ENCODE measurements at regions of chr5 and their contacts with region 1.

Region 1: DNA sequence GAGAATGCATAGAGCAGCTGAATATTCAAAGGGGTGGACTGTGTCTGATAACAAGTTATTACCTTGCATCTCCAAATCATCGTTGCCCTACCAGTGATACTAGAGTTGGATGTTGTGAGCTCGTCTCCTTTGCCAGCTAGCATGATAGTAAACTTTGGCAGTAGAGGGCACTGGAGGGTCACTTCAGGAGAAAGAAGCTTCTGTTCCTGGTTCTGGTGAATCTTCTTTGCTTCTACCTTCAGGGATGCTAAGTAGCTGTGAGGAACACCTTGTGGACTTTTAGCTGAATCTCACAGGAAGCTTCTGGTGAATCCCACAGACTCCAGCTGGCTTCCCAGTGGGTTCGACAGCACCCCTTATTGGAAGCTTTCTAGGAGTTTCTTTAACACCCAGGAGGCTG is 626.6 kb upstream of the SGCD start:
- DNase-seq: peak in 3 of 9 experiments; percentile 20 to 66 (median 53)
- ATAC-seq: no peak
- H3K4me3 ChIP-seq: no peak overlapping the region
- H3K4me3 Mint-ChIP-seq: no peak overlapping the region
- H3K27ac ChIP-seq: no peak overlapping the region
- H3K27ac Mint-ChIP-seq: no peak overlapping the region
- H3K4me1 ChIP-seq: no peaks in the 10 kb centered on the region
- H3K4me1 Mint-ChIP-seq: no peaks in the 10 kb centered on the region
- H3K27me3 ChIP-seq: no peaks in the 10 kb centered on the region
- H3K27me3 Mint-ChIP-seq: no peaks in the 10 kb centered on the region
- CTCF ChIP-seq: no peak

Region 2: GRCh38 chr5:155587458-155587857 is 112.9 kb before region 1 on chr5:
- CTCF ChIA-PET with region 1: no interaction called
- POLR2A ChIA-PET with region 1: no interaction called
- intact Hi-C with region 1: no loop called
- DNase-seq: no peak
- ATAC-seq: no peak
- H3K4me3 ChIP-seq: no peak overlapping the region
- H3K4me3 Mint-ChIP-seq: no peak overlapping the region
- H3K27ac ChIP-seq: no peak overlapping the region
- H3K27ac Mint-ChIP-seq: no peak overlapping the region
- H3K4me1 ChIP-seq: no peaks in the 10 kb centered on the region
- H3K4me1 Mint-ChIP-seq: no peaks in the 10 kb centered on the region
- H3K27me3 ChIP-seq: no peaks in the 10 kb centered on the region
- H3K27me3 Mint-ChIP-seq: no peaks in the 10 kb centered on the region
- CTCF ChIP-seq: no peak

Region 3: GRCh38 chr5:155679530-155679929 is 20.8 kb before region 1 on chr5:
- CTCF ChIA-PET with region 1: no interaction called
- POLR2A ChIA-PET with region 1: no interaction called
- intact Hi-C with region 1: no loop called
- DNase-seq: no peak
- ATAC-seq: no peak
- H3K4me3 ChIP-seq: no peak overlapping the region
- H3K4me3 Mint-ChIP-seq: no peak overlapping the region
- H3K27ac ChIP-seq: no peak overlapping the region
- H3K27ac Mint-ChIP-seq: no peak overlapping the region
- H3K4me1 ChIP-seq: no peaks in the 10 kb centered on the region
- H3K4me1 Mint-ChIP-seq: no peaks in the 10 kb centered on the region
- H3K27me3 ChIP-seq: no peaks in the 10 kb centered on the region
- H3K27me3 Mint-ChIP-seq: peaks cover 17% of the 10 kb centered on the region
- CTCF ChIP-seq: no peak

Region 4: DNA sequence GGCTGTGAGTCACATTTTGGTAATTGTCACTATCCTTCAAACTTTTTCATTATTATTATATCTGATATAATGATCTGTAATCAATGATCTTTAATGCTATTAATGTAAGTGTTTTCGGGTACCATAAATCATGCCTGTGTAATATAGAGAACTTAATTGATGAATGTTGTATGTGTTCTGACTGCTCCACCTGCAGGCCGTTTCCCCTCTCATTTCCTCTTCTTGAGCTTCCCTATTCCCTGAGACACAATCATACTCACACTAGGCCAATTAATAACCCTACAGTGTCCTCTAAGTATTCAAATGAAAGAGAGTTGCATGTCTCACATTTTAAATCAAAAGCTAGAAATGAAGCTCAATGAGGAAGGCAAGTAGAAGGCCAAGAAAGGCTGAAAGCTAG is 205.7 kb after region 1 on chr5:
- CTCF ChIA-PET with region 1: interaction called, 12 read pairs
- POLR2A ChIA-PET with region 1: no interaction called
- intact Hi-C with region 1: no loop called
- DNase-seq: peak in 2 of 9 experiments; percentile 29 to 53
- ATAC-seq: no peak
- H3K4me3 ChIP-seq: no peak overlapping the region
- H3K4me3 Mint-ChIP-seq: no peak overlapping the region
- H3K27ac ChIP-seq: no peak overlapping the region
- H3K27ac Mint-ChIP-seq: no peak overlapping the region
- H3K4me1 ChIP-seq: no peaks in the 10 kb centered on the region
- H3K4me1 Mint-ChIP-seq: no peaks in the 10 kb centered on the region
- H3K27me3 ChIP-seq: no peaks in the 10 kb centered on the region
- H3K27me3 Mint-ChIP-seq: no peaks in the 10 kb centered on the region
- CTCF ChIP-seq: no peak

Region 5: DNA sequence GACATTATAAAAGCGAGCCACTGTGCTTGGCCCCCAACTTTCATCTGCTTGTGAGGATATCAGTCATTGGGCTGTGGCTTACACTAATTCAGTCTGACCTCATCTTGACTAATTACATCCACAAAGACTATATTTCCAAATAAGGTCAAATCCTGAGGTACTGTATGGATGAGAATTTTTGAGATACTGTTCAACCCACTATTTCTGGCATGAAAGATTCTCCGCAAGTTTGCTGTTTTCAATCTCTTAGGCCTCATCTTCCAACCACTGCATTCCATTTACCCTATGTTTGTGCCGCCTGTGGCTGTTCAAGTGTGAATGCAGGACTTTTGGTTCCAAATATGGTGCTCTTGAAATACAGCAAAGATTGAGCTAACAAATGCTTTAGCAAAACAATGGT is 225.7 kb after region 1 on chr5:
- CTCF ChIA-PET with region 1: no interaction called
- POLR2A ChIA-PET with region 1: no interaction called
- intact Hi-C with region 1: loop called in 1 of 2 experiments (anchors 10 kb)
- DNase-seq: no peak
- ATAC-seq: no peak
- H3K4me3 ChIP-seq: no peak overlapping the region
- H3K4me3 Mint-ChIP-seq: no peak overlapping the region
- H3K27ac ChIP-seq: no peak overlapping the region
- H3K27ac Mint-ChIP-seq: no peak overlapping the region
- H3K4me1 ChIP-seq: no peaks in the 10 kb centered on the region
- H3K4me1 Mint-ChIP-seq: no peaks in the 10 kb centered on the region
- H3K27me3 ChIP-seq: no peaks in the 10 kb centered on the region
- H3K27me3 Mint-ChIP-seq: peaks cover 7% of the 10 kb centered on the region
- CTCF ChIP-seq: no peak

Measured in CD8-positive, alpha-beta T cell (primary cell).